Heart left ventricle (tissue), 16 donors: ENCODE measurements at regions of chr17 and their contacts with region 1.

Region 1: GRCh38 chr17:16987830-16988601 is 16.1 kb upstream of the TNFRSF13B start:
- DNase-seq: peak; percentile 74 to 86 (median 77)
- ATAC-seq: peak; percentile 47 to 83 (median 78)
- H3K4me3 ChIP-seq: peak overlapping the region in 1 of 12 donors; percentile 26
- H3K27ac ChIP-seq: peak overlapping the region in 3 of 12 donors; percentile 42 to 82 (median 53)
- H3K4me1 ChIP-seq: peaks cover 0 to 30% (median 6%) of the 10 kb centered on the region in 12 donors
- H3K27me3 ChIP-seq: no peaks in the 10 kb centered on the region
- CTCF ChIP-seq: no peak
- POLR2A ChIP-seq: no peak

Region 2: DNA sequence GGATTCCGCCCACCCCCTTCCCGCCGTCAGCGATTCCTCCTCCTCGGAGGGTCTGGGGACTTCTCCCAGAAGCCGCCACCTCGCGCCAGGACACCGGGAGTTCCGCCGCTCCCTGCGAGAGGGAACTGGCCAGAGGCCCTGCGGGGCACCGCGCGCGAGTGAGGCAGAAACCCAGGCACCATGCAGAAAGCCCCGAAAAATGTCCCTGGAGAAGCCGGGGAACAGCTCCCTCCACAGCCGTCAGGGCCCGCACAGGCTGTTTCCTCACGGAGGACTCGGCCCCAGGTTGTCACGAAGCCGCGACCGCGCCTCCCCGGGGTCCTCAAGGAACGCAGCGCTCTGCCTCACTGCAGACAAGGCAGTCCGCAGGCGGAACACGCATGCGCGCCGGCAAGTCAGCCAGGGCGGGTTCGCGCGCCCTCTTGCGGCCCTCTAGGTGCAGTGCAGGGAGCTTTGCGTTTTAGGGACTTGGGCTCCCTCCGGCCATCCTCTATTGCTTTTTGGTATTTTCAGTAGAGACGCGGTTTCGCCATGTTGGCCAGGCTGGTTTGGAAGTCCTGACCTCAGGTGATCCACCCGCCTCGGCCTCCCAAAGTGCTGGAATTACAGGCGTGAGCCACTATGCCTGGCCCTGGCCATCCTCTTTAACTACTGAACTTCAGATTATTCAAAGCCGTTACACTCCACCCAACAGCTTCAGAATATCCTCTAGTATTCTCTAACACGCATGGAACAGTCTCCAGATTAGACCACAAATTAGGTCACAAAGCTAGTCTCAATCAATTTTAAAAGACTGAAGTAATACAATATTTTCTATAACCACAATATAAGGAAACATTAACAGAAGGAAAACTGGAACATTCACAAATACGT is 398.7 kb before region 1 on chr17:
- intact Hi-C with region 1: loop called in 1 of 10 experiments (anchors 5 kb)
- DNase-seq: peak; percentile 88 to 97 (median 91)
- ATAC-seq: peak; percentile 77 to 94 (median 90)
- H3K4me3 ChIP-seq: peak overlapping the region; percentile 44 to 84 (median 64)
- H3K27ac ChIP-seq: peak overlapping the region in 10 of 12 donors; percentile 35 to 80 (median 62)
- H3K4me1 ChIP-seq: peaks cover 0 to 14% (median 3%) of the 10 kb centered on the region in 12 donors
- H3K27me3 ChIP-seq: no peaks in the 10 kb centered on the region
- CTCF ChIP-seq: peak; percentile 98 to 100 (median 99)
- POLR2A ChIP-seq: peak in 1 of 2 donors; percentile 67

Region 3: GRCh38 chr17:16922386-16923104 is 65.5 kb before region 1 on chr17:
- intact Hi-C with region 1: loop called in 2 of 10 experiments (anchors 5 kb)
- DNase-seq: no peak
- ATAC-seq: no peak
- H3K4me3 ChIP-seq: no peak overlapping the region
- H3K27ac ChIP-seq: no peak overlapping the region
- H3K4me1 ChIP-seq: no peaks in the 10 kb centered on the region
- H3K27me3 ChIP-seq: no peaks in the 10 kb centered on the region
- CTCF ChIP-seq: no peak
- POLR2A ChIP-seq: no peak